CD4-positive, alpha-beta memory T cell (primary cell): ENCODE measurements at regions of chr7 and their contacts with region 1.

Region 1: DNA sequence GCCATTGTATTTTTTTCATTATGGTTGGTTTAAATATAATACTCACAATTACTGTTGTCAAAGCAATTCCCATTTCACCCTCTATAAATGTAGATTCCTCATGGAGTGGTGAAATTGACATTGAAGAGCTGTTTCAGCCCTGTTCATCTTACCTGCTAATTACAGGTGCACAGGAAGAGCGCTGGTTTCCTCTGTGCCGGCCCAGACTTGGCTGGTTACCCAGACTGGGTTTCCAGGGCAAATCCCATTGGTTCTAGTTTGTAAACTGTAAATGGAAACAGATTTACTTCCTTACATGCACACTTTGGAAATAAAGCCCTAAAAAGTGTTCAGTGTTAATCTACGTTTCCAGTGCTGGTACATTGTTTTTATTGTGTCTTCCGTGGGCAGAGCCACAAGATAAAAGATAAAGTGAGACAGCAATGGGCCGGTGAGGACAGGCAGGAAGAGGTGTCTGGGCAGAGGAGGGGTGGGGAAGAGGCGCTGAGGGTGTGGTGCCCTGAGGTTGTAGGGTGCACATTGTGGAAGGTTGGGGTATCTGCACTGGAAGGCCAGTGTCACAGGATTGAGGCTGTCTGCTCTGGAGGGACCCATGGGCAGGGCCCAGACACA is 71.6 kb upstream of the ZPBP start:
- DNase-seq: peak; percentile 41 to 62 (median 51)
- H3K4me3 ChIP-seq: peak overlapping the region in 1 of 2 donors; percentile 38
- H3K4me3 Mint-ChIP-seq: peak overlapping the region; percentile 22 to 83 (median 77)
- H3K27ac ChIP-seq: peak overlapping the region; percentile 43
- H3K27ac Mint-ChIP-seq: peak overlapping the region; percentile 70 to 93 (median 85)
- H3K4me1 ChIP-seq: peaks cover 63% of the 10 kb centered on the region
- H3K4me1 Mint-ChIP-seq: peaks cover 40 to 74% (median 58%) of the 10 kb centered on the region in 4 donors
- H3K27me3 ChIP-seq: no peaks in the 10 kb centered on the region
- H3K27me3 Mint-ChIP-seq: no peaks in the 10 kb centered on the region

Region 2: DNA sequence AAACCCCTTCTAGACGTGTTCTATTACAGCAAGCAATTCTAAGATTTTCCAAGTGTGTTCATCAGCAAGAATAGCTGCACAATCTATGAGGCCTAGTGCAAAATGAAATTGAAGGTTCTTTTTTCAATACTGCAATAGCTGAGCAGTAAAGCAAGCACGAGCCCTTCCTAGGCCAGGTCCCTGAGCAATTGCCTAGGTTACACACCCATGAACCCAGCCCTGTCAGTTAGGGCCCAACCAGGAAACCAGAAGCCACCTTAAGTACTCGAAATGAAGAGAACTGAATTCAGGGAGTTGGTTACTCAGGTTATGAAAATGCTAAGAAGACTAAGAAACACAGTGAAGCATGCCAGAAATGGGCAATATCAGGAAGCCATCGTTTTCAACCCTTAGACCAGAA is 443.2 kb before region 1 on chr7:
- CTCF ChIA-PET with region 1: no interaction called
- POLR2A ChIA-PET with region 1: no interaction called
- intact Hi-C with region 1: no loop called
- DNase-seq: no peak
- H3K4me3 ChIP-seq: no peak overlapping the region
- H3K4me3 Mint-ChIP-seq: no peak overlapping the region
- H3K27ac ChIP-seq: no peak overlapping the region
- H3K27ac Mint-ChIP-seq: no peak overlapping the region
- H3K4me1 ChIP-seq: no peaks in the 10 kb centered on the region
- H3K4me1 Mint-ChIP-seq: no peaks in the 10 kb centered on the region
- H3K27me3 ChIP-seq: no peaks in the 10 kb centered on the region
- H3K27me3 Mint-ChIP-seq: no peaks in the 10 kb centered on the region

Region 3: DNA sequence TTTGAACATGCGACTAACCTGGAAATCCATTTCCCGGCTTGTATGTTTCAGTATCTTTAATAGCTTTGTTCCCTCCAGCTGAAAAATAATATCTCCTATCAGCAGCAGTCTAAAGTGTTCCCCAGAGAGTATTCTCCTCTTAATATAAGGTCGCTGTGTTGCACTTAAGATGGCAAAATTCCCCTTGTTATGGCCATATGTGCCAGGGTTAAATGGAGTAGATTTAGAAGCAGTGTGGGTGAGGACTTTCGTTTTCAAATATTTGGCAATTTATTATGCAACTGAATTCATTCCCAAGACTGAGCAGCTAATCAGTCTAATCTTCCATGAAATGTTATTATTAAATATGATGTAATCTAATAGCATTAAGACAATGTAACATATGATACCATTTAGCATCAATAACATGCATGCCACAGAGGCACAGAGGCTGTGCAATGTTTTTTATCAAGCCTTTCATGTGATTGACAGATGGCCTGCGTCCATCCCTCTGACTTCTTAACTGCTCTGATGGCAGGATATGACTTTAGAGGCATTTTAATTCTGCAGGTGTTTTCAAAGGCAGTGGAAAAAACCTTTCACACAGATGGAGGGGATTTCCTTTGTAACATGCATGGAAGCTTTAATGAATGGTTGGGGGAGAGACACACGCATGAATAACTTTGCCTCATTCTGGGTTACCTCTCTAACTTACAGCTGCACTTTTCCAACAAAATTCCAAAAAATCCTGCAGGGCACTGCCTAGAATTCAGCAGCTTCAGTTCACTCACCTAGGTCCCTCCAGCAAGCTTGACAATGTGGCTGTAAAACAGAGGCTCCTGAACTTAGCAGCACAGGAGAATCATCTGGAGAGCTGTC is 16.5 kb before region 1 on chr7:
- CTCF ChIA-PET with region 1: interaction called, 13 read pairs
- POLR2A ChIA-PET with region 1: interaction called, 10 read pairs
- intact Hi-C with region 1: loop called (anchors 2 kb)
- DNase-seq: peak; percentile 54 to 81 (median 64)
- H3K4me3 ChIP-seq: no peak overlapping the region
- H3K4me3 Mint-ChIP-seq: peak overlapping the region in 7 of 8 donors; percentile 17 to 66 (median 51)
- H3K27ac ChIP-seq: peak overlapping the region; percentile 55
- H3K27ac Mint-ChIP-seq: peak overlapping the region; percentile 77 to 96 (median 93)
- H3K4me1 ChIP-seq: peaks cover 44% of the 10 kb centered on the region
- H3K4me1 Mint-ChIP-seq: peaks cover 34 to 62% (median 47%) of the 10 kb centered on the region in 4 donors
- H3K27me3 ChIP-seq: no peaks in the 10 kb centered on the region
- H3K27me3 Mint-ChIP-seq: no peaks in the 10 kb centered on the region

Region 4: DNA sequence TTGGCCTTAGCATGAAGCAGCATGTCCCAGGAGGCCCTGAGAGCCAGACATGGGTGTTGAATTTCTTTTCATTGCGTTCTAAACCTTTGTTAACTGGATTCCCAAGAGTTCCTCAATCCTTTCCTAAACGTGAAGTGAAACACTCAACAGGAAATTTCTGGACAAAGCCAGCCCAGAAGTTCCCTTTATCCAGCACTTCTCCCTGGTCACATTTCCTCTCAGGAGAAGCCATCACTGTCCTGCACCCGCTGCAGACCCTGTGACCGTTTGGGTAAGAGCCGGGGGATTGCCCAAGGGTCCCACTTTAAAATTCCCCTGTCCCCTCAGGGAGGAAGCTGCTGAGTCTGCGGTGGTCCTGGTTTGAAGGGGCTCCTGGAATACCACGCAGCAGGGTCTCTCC is 16.4 kb after region 1 on chr7:
- CTCF ChIA-PET with region 1: interaction called, 4 read pairs
- POLR2A ChIA-PET with region 1: interaction called, 7 read pairs
- intact Hi-C with region 1: loop called (anchors 2 kb)
- DNase-seq: no peak
- H3K4me3 ChIP-seq: no peak overlapping the region
- H3K4me3 Mint-ChIP-seq: no peak overlapping the region
- H3K27ac ChIP-seq: no peak overlapping the region
- H3K27ac Mint-ChIP-seq: no peak overlapping the region
- H3K4me1 ChIP-seq: no peaks in the 10 kb centered on the region
- H3K4me1 Mint-ChIP-seq: no peaks in the 10 kb centered on the region
- H3K27me3 ChIP-seq: no peaks in the 10 kb centered on the region
- H3K27me3 Mint-ChIP-seq: peaks cover 0 to 4% of the 10 kb centered on the region in 2 donors